HCT116 (cell line): ENCODE measurements at regions of chr7 and their contacts with region 1.

Region 1: DNA sequence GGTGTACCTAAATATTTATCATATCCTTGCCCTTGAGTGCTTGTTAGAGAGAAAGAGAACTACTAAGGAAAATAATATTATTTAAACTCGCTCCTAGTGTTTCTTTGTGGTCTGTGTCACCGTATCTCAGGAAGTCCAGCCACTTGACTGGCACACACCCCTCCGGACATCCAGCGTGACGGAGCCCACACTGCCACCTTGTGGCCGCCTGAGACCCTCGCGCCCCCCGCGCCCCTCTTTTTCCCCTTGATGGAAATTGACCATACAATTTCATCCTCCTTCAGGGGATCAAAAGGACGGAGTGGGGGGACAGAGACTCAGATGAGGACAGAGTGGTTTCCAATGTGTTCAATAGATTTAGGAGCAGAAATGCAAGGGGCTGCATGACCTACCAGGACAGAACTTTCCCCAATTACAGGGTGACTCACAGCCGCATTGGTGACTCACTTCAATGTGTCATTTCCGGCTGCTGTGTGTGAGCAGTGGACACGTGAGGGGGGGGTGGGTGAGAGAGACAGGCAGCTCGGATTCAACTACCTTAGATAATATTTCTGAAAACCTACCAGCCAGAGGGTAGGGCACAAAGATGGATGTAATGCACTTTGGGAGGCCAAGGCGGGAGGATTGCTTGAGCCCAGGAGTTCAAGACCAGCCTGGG is 11.4 kb downstream of the SERPINE1 start:
- DNase-seq: peak; percentile 97
- ATAC-seq: peak; percentile 88
- H3K4me3 ChIP-seq: peak overlapping the region; percentile 10 to 49; a peak in 3 of 4 replicates
- H3K27ac ChIP-seq: peak overlapping the region; percentile 83
- H3K4me1 ChIP-seq: peaks cover 27 to 71% of the 10 kb centered on the region in 2 experiments
- H3K27me3 ChIP-seq: no peaks in the 10 kb centered on the region
- CTCF ChIP-seq: peak in 2 of 3 experiments; percentile 79 to 96; a peak in 4 of 6 replicates
- POLR2A ChIP-seq: no peak
- RAD21 ChIP-seq: no peak

Region 2: DNA sequence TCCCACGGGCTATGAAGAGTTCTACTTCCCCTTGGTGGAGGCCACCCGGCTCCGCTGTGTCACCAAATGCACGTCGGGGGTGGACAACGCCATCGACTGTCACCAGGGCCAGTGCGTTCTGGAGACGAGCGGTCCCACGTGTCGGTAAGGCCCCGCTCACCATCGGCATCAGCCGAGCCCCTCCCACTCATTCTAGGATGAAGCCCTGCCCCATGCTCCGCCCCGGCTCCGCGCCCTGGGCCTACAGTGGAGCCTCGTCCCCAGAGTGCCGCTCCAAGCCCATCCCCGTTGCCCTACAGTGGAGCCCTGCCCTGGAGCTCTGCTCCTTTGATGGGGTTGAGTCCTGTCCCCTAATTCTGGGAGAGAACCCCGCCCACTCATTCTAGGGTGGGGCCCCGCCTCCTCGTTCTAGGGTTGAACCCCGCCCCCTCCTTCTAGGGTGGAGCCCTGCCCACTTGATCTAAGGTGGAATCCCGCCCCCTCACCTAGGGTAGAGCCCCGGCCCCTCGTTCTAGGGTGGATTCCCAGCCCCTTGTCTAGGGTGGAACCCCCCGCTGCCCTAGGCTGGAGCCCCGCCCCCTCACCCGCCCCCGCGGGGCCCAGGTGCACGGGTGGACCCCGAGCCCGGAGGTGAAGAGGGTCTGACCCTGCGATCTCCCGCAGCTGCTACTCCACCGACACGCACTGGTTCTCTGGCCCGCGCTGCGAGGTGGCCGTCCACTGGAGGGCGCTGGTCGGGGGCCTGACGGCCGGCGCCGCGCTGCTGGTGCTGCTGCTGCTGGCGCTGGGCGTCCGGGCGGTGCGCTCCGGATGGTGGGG is 172.4 kb before region 1 on chr7:
- CTCF ChIA-PET with region 1: no interaction called
- POLR2A ChIA-PET with region 1: no interaction called
- RAD21 ChIA-PET with region 1: no interaction called
- intact Hi-C with region 1: loop called (anchors 2 kb)
- DNase-seq: peak; percentile 91
- ATAC-seq: peak; percentile 91
- H3K4me3 ChIP-seq: peak overlapping the region; percentile 58 to 63
- H3K27ac ChIP-seq: peak overlapping the region; percentile 61; the same call in 1 of the 2 replicates
- H3K4me1 ChIP-seq: peaks cover 6 to 23% of the 10 kb centered on the region in 2 experiments; a peak in 3 of 4 replicates
- H3K27me3 ChIP-seq: peaks cover 25% of the 10 kb centered on the region; the same call in 1 of the 2 replicates
- CTCF ChIP-seq: peak in 2 of 3 experiments; percentile 97 to 99; a peak in 4 of 6 replicates
- POLR2A ChIP-seq: no peak
- RAD21 ChIP-seq: no peak

Region 3: GRCh38 chr7:100983451-100984187 is 154.7 kb before region 1 on chr7:
- CTCF ChIA-PET with region 1: no interaction called
- POLR2A ChIA-PET with region 1: no interaction called
- RAD21 ChIA-PET with region 1: no interaction called
- intact Hi-C with region 1: no loop called
- DNase-seq: peak; percentile 6
- ATAC-seq: no peak
- H3K4me3 ChIP-seq: no peak overlapping the region
- H3K27ac ChIP-seq: no peak overlapping the region
- H3K4me1 ChIP-seq: peaks cover 0 to 8% of the 10 kb centered on the region in 2 experiments; a peak in 1 of 4 replicates
- H3K27me3 ChIP-seq: no peaks in the 10 kb centered on the region
- CTCF ChIP-seq: no peak
- POLR2A ChIP-seq: no peak
- RAD21 ChIP-seq: no peak

Region 4: GRCh38 chr7:101094416-101095375 is 43.6 kb before region 1 on chr7:
- CTCF ChIA-PET with region 1: interaction called, 10 read pairs
- POLR2A ChIA-PET with region 1: interaction called, 6 read pairs
- RAD21 ChIA-PET with region 1: no interaction called
- intact Hi-C with region 1: loop called (anchors 1 kb)
- DNase-seq: no peak
- ATAC-seq: peak; percentile 77
- H3K4me3 ChIP-seq: no peak overlapping the region
- H3K27ac ChIP-seq: no peak overlapping the region
- H3K4me1 ChIP-seq: peaks cover 15 to 52% of the 10 kb centered on the region in 2 experiments
- H3K27me3 ChIP-seq: no peaks in the 10 kb centered on the region
- CTCF ChIP-seq: peak in 2 of 3 experiments; percentile 83 to 89; a peak in 4 of 6 replicates
- POLR2A ChIP-seq: no peak
- RAD21 ChIP-seq: no peak

Region 5: DNA sequence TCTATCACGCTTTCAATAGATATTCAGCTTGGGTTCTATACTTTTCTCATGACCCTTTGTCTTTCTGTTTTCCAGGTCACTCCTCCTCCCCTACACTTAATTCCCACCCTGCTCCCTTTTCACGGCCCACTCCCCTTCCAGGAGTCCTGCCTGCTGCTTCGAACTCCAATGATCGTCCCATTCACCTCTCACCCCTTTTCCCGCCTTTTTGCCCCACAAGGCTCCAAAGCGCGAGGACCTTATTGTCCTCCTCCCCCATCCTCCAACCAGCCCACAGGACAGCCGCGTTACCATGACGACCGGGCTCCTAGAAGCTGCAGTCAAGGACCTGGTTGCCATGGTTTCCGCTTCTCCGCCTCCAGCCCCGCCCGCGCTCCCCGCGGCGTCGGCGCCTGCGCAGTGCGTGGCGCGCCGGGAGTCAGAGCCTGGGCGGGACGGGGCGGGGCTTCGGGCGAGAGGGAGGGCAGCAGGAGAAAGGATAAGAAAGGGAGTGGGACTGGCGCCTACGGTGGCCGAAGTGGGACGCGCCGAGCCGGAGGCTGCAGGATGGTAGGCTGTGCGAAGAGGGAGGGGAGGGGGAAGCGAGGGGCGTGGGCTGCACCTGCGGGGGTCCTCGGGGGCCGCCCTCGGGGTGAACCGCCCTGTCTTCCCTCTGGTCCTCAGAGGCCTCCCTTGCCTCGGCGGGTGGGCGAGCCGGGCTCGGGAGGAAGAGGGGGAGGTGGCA is 15.8 kb after region 1 on chr7 and contains the start of gene AP1S1:
- CTCF ChIA-PET with region 1: interaction called, 44 read pairs
- POLR2A ChIA-PET with region 1: interaction called, 8 read pairs
- RAD21 ChIA-PET with region 1: interaction called in 1 of 2 experiments, 7 read pairs
- intact Hi-C with region 1: no loop called
- DNase-seq: peak; percentile 96
- ATAC-seq: peak; percentile 89
- H3K4me3 ChIP-seq: peak within 1 kb of the TSS; percentile 74 to 85
- H3K27ac ChIP-seq: peak within 1 kb of the TSS; percentile 78
- H3K4me1 ChIP-seq: peaks cover 28 to 43% of the 10 kb centered on the region in 2 experiments
- H3K27me3 ChIP-seq: no peaks in the 10 kb centered on the region
- CTCF ChIP-seq: no peak
- POLR2A ChIP-seq: no peak
- RAD21 ChIP-seq: no peak
- total RNA-seq, gene AP1S1: 130 TPM

Region 6: DNA sequence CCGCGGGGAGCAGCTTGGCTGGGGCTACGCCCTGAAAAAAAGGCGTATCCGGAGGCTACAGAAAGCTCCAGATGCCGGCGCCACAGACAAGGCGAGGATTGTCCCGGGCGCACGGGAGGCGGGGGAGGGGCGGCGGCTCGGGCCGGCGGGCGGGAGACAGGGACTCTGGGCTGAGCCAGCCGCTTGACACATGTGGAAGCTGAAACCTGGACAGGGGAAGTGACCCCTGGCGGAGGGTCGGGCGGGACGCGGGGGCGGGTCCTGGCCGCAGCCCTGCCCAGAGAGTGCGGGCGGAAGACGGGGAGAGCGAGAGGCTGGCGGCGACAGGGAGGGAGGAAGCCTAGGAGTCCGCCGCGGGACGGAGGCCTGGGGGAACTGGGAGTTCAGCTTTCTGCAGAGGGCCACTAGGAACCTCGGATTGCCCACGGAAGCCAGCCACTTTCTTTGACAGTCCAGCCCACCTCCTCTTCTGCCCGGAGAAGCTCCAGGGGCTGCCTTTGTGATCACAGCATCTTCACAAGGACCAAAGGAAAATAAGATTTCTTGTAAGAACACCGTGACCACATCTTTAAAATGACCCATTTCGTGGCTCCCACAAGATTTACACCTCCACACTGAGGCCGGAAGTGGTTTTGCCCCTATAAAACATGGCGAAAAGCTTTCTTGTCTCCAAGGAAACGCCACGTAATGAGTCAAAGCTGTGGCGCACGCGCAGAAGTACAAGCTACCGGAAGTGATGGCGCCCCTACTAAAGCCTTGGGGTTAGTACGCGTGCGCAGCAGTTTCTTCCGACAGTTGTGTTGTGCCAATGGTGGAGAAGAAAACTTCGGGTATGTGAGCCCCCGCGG is 79.3 kb after region 1 on chr7 and contains the starts of genes PLOD3 and ZNHIT1:
- CTCF ChIA-PET with region 1: interaction called, 12 read pairs
- POLR2A ChIA-PET with region 1: interaction called, 4 read pairs
- RAD21 ChIA-PET with region 1: no interaction called
- intact Hi-C with region 1: no loop called
- DNase-seq: peak; percentile 96
- ATAC-seq: peak; percentile 91
- H3K4me3 ChIP-seq: peak within 1 kb of the TSS; percentile 93 to 97
- H3K27ac ChIP-seq: peak within 1 kb of the TSS; percentile 91
- H3K4me1 ChIP-seq: peaks cover 0 to 21% of the 10 kb centered on the region in 2 experiments; a peak in 2 of 4 replicates
- H3K27me3 ChIP-seq: no peaks in the 10 kb centered on the region
- CTCF ChIP-seq: 0 out of 6 replicates have a peak, but pooled peaks of 1 of the 3 experiments have one; percentile 15
- POLR2A ChIP-seq: peak; percentile 51
- RAD21 ChIP-seq: no peak
- total RNA-seq, gene PLOD3: 83.7 TPM
- total RNA-seq, gene ZNHIT1: 69.4 TPM

Region 7: DNA sequence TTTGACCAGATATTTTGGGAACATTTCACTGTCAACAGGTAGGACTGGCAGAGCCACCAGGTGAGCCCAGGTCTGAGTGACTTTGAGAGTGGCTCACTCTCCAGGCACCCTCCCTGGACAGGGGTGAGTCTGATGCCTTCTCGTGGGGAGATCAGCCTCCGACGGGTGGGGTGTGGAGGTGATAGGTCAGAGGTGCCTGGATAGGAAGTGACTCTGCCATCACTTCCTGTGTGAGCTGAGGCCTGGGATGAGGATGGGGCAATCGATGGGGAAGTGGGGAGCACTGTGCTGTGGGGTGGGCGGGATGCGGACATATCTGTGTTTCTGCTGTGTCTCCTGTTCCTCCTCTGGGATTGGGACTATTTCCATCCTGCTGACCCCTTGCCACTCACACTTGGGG is 148.7 kb after region 1 on chr7:
- CTCF ChIA-PET with region 1: interaction called, 66 read pairs
- POLR2A ChIA-PET with region 1: interaction called, 7 read pairs
- RAD21 ChIA-PET with region 1: interaction called, 4 to 9 read pairs
- intact Hi-C with region 1: no loop called
- DNase-seq: no peak
- ATAC-seq: no peak
- H3K4me3 ChIP-seq: no peak overlapping the region
- H3K27ac ChIP-seq: no peak overlapping the region
- H3K4me1 ChIP-seq: peaks cover 4 to 6% of the 10 kb centered on the region in 2 experiments; a peak in 2 of 4 replicates
- H3K27me3 ChIP-seq: no peaks in the 10 kb centered on the region
- CTCF ChIP-seq: no peak
- POLR2A ChIP-seq: no peak
- RAD21 ChIP-seq: no peak